CD4-positive, alpha-beta T cell (primary cell): ENCODE measurements at regions of chr16 and their contacts with region 1.

Region 1: DNA sequence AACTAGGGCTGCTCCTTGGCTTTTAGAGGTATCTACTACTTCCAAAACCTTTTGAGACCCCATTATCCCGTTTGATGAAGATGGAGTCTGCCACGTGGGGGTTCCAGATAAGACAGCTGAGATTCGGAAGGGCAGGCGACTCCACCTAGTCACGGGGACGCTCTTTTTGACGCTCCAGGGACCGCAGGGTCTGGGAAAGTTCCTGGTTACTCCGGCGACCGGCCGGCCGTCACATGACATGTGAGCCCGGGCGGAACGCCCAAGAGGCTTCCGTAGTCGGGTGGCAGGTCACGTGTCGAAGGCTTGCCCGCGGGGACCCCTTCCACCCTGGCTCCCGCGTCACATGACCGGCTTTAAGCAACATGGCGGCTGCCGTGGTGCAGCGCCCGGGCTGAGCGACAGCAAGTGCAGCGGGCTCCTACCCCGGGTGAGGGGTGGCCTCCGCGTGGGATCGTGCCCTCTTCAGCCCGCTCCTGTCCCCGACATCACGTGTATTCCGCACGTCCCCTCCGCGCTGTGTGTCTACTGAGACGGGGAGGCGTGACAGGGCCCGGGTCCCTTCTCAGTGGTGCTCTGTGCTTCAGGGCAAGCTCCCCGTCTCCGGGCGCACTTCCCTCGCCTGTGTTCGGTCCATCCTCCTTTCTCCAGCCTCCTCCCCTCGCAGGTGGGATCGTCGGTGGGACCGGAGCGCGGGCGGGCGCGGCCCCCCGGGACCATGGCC is at the start of gene SPNS1:
- DNase-seq: peak; percentile 77 to 95 (median 86)
- ATAC-seq: peak; percentile 89
- H3K4me3 ChIP-seq: peak within 1 kb of the TSS; percentile 88
- H3K4me3 Mint-ChIP-seq: peak within 1 kb of the TSS; percentile 99
- H3K27ac ChIP-seq: peak within 1 kb of the TSS; percentile 43 to 55
- H3K27ac Mint-ChIP-seq: peak within 1 kb of the TSS; percentile 94
- H3K4me1 ChIP-seq: peaks cover 33% of the 10 kb centered on the region
- H3K4me1 Mint-ChIP-seq: peaks cover 43% of the 10 kb centered on the region
- H3K27me3 ChIP-seq: no peaks in the 10 kb centered on the region
- H3K27me3 Mint-ChIP-seq: no peaks in the 10 kb centered on the region
- CTCF ChIP-seq: no peak
- total RNA-seq, gene SPNS1: 24.4 to 28.1 TPM

Region 2: GRCh38 chr16:28950648-28951409 is 23.8 kb before region 1 on chr16 and contains the start of gene NFATC2IP:
- CTCF ChIA-PET with region 1: interaction called, 3 read pairs
- POLR2A ChIA-PET with region 1: interaction called, 18 read pairs
- intact Hi-C with region 1: loop called in 1 of 2 experiments (anchors 1 kb)
- DNase-seq: peak; percentile 98 to 100 (median 99)
- ATAC-seq: peak; percentile 95
- H3K4me3 ChIP-seq: peak within 1 kb of the TSS; percentile 77
- H3K4me3 Mint-ChIP-seq: peak within 1 kb of the TSS; percentile 96
- H3K27ac ChIP-seq: peak within 1 kb of the TSS; percentile 36 to 63
- H3K27ac Mint-ChIP-seq: peak within 1 kb of the TSS; percentile 74
- H3K4me1 ChIP-seq: peaks cover 31% of the 10 kb centered on the region
- H3K4me1 Mint-ChIP-seq: peaks cover 28% of the 10 kb centered on the region
- H3K27me3 ChIP-seq: no peaks in the 10 kb centered on the region
- H3K27me3 Mint-ChIP-seq: no peaks in the 10 kb centered on the region
- CTCF ChIP-seq: no peak
- total RNA-seq, gene NFATC2IP: 47.4 to 51.0 TPM

Region 3: DNA sequence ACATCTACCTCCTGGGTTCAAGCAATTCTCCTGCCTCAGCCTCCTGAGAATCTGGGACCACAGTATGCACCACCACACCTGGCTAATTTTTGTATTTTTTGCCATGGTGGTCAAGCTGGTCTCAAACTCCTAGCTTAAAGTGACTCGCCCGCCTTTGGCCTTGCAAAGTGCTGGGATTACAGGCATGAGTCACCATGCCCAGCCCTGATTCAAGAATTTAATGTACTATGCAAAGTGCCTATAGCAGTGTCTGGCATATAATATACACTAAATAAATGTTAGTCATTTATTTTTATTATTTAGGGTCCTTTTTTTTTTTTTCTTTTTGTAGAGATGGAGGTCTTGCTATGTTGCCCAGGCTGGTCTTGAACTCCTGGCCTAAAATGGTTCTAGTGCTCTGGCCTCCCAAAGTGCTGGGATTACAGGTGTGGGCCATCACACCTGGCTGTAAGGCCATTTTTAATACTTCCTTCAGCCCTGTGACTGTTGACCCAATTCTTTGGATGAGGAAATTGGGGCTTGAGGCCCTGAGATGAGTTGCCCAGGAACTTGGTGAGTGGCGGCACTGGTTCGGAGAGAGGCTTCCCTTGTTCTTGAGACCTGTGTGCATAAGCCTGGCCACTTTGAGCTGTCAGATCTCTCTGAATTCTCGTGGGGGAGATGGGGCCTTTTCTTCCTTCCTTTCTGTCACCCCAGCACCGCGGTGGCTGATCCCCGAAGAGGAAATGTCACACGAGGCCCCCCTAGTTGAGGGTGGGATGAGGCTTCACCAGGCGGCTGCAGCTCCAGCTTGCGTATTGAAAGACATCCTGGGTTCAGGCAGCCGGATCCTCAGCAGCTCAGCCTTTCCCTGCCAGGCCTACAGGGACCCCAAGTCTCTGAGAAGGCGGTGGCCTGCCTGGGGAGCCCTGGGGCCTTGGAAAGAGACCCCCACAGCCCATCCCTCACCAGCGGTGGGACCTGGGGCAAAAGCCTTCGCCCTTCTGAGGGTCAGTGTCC is 49.0 kb after region 1 on chr16:
- CTCF ChIA-PET with region 1: interaction called, 7 read pairs
- POLR2A ChIA-PET with region 1: interaction called, 11 read pairs
- intact Hi-C with region 1: no loop called
- DNase-seq: peak in 2 of 14 experiments; percentile 24 to 60
- ATAC-seq: peak; percentile 28
- H3K4me3 ChIP-seq: no peak overlapping the region
- H3K4me3 Mint-ChIP-seq: peak overlapping the region; percentile 67
- H3K27ac ChIP-seq: peak overlapping the region; percentile 45 to 57
- H3K27ac Mint-ChIP-seq: peak overlapping the region; percentile 80
- H3K4me1 ChIP-seq: peaks cover 48% of the 10 kb centered on the region
- H3K4me1 Mint-ChIP-seq: peaks cover 64% of the 10 kb centered on the region
- H3K27me3 ChIP-seq: no peaks in the 10 kb centered on the region
- H3K27me3 Mint-ChIP-seq: no peaks in the 10 kb centered on the region
- CTCF ChIP-seq: no peak